ENCODE measurements at regions of chr12 and their contacts with region 1.

Region 1: GRCh38 chr12:120292661-120293531 is at the start of gene RNU4-1:
- DNase-seq: peak; percentile 84
- H3K4me3 Mint-ChIP-seq: no peak within 1 kb of the TSS
- H3K27ac Mint-ChIP-seq: no peak within 1 kb of the TSS
- H3K4me1 Mint-ChIP-seq: peaks cover 12% of the 10 kb centered on the region
- H3K27me3 Mint-ChIP-seq: peaks cover 7% of the 10 kb centered on the region
- total RNA-seq, gene RNU4-1: 1,910 to 2,156 TPM

Region 2: DNA sequence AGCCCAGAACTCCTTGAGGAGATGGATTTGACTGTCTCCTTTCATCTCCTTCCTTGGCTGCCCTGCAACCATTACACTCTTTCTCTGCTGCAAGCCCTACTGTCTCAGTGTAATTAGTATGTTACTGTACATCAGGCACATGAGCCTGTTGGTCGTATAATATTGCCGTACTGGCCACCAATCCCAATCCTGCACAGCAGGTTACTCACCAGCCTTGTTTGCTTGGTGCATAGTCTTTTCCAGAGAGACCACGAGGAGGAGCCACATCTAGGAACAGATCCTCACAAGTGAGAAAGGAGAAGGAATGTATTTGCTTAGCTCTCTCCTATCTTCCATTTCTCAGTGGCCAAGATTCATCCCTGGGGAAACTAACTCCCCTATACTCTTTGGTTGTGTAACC is 336.9 kb before region 1 on chr12:
- CTCF ChIA-PET with region 1: no interaction called
- POLR2A ChIA-PET with region 1: no interaction called
- DNase-seq: no peak
- H3K4me3 Mint-ChIP-seq: no peak overlapping the region
- H3K27ac Mint-ChIP-seq: no peak overlapping the region
- H3K4me1 Mint-ChIP-seq: no peaks in the 10 kb centered on the region
- H3K27me3 Mint-ChIP-seq: peaks cover 7% of the 10 kb centered on the region

Region 3: DNA sequence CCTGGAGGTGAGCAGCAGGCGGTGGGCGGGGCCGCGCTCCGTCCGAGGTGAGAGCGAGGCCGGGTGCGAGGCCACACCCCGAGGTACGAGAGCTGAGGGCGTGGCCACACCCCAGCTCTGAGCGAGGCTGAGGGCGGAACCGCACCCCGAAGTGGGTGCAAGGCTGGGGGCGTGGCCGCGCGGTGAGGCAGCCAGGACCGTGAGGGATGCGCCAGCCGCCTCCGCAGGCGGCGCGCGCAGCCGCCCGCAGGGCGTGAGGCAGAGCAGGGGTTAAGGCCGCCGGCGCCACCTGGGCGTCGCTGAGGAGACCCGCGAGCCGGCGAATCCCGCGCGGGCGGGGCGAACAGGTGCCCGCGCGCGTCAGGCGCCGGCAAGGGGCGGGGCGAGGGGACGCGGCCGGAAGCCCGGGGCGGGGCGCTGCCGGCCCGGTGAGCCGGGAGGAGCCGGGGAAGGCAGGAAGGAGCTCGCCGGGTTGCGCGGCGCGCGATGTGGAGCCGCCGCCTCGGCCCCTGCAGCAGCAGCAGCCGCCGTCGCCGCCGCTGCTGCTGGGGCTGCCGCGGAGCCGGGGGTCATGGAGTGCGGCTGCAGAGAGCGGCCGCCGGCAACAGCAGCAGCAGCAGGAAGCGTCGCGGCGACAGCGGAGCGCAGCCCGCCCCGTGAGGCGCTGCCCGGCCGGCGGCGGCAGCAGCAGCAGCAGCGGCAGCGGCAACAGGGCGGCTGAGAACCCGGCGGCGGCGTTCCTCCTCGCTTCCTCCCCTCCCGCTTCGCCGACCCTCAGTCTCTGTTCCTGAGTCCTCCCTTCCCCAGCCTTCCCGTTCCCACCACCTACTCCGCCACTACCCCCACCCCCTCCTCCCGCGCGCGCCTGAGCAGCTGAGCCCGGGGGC is 303.9 kb before region 1 on chr12 and contains the start of gene BICDL1:
- CTCF ChIA-PET with region 1: no interaction called
- POLR2A ChIA-PET with region 1: interaction called, 24 read pairs
- DNase-seq: peak; percentile 97
- H3K4me3 Mint-ChIP-seq: peak within 1 kb of the TSS; percentile 79
- H3K27ac Mint-ChIP-seq: peak within 1 kb of the TSS; percentile 82
- H3K4me1 Mint-ChIP-seq: peaks cover 40% of the 10 kb centered on the region
- H3K27me3 Mint-ChIP-seq: peaks cover 9% of the 10 kb centered on the region
- total RNA-seq, gene BICDL1: 44.6 to 44.7 TPM

Region 4: DNA sequence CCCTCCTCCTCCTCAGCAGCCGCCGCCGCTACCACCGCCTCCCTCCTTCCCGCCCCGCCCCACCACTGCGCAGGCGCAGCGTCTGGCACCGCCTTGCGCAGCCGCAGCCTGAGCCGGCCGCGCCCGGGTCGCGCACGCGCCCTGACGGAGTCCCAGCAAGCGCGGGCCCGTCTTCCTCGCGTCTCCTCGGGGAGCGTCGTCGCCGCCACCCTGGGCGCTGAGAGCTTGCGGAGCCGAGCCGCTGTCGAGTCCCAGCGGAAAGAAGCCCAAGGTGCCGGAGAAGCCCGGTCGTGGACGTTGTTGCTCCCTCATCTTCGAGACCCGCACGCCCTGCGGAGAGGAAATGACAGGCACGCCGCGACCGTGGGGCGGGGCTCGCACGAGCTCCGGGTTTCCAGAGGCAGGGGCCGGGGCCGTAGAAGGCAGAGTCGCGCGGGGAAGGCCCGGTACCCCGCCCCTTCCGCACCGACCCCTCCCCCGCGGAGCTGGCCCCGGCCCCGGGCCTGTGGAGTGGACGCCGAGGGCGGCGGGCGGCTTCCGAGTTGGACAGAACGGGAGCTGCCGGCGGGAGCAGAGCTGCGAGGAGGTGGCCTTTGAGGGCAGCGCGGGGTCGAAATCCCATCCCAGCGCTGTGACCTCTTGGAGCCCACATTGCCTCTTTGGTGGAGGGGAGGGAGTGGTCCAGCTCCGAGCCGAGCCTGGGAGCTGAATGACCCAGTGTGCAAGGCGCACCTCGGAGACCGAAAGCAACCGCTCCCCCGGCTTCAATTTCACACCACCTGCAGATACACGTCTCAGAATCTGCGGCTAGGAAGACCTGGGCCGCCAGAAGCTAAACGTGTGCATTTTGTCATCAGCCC is 175.9 kb before region 1 on chr12:
- CTCF ChIA-PET with region 1: interaction called, 3 read pairs
- POLR2A ChIA-PET with region 1: interaction called, 159 read pairs
- DNase-seq: peak; percentile 98
- H3K4me3 Mint-ChIP-seq: peak overlapping the region; percentile 89
- H3K27ac Mint-ChIP-seq: peak overlapping the region; percentile 80
- H3K4me1 Mint-ChIP-seq: peaks cover 76% of the 10 kb centered on the region
- H3K27me3 Mint-ChIP-seq: no peaks in the 10 kb centered on the region

Region 5: GRCh38 chr12:120234643-120235368 is 58.1 kb before region 1 on chr12:
- CTCF ChIA-PET with region 1: interaction called, 81 read pairs
- POLR2A ChIA-PET with region 1: interaction called, 330 read pairs
- DNase-seq: no peak
- H3K4me3 Mint-ChIP-seq: no peak overlapping the region
- H3K27ac Mint-ChIP-seq: no peak overlapping the region
- H3K4me1 Mint-ChIP-seq: peaks cover 85% of the 10 kb centered on the region
- H3K27me3 Mint-ChIP-seq: no peaks in the 10 kb centered on the region

Region 6: DNA sequence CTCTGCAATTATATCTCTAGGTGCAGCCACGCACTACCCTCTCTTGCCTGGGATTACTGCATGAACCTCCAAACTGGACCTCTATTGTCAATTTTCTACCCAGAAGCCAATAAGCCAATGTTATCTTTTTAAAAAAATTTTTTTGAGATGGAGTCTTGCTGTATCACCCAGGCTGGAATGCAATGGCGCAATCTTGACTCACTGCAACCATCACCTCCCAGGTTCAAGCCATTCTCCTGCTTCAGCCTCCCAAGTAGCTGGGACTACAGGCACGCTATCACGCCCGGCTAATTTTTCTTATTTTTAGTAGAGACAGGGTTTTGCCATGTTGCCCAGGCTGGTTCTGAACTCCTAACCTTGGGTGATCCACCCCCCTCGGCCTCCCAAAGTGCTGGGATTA is 16.2 kb before region 1 on chr12:
- CTCF ChIA-PET with region 1: no interaction called
- POLR2A ChIA-PET with region 1: interaction called, 58 read pairs
- DNase-seq: no peak
- H3K4me3 Mint-ChIP-seq: no peak overlapping the region
- H3K27ac Mint-ChIP-seq: no peak overlapping the region
- H3K4me1 Mint-ChIP-seq: no peaks in the 10 kb centered on the region
- H3K27me3 Mint-ChIP-seq: peaks cover 4% of the 10 kb centered on the region

Region 7: GRCh38 chr12:120469450-120470149 is 176.7 kb after region 1 on chr12 and contains the start of gene SRSF9:
- CTCF ChIA-PET with region 1: interaction called, 3 read pairs
- POLR2A ChIA-PET with region 1: interaction called, 31 read pairs
- DNase-seq: peak; percentile 97
- H3K4me3 Mint-ChIP-seq: peak within 1 kb of the TSS; percentile 93
- H3K27ac Mint-ChIP-seq: peak within 1 kb of the TSS; percentile 84
- H3K4me1 Mint-ChIP-seq: peaks cover 47% of the 10 kb centered on the region
- H3K27me3 Mint-ChIP-seq: peaks cover 2% of the 10 kb centered on the region
- total RNA-seq, gene SRSF9: 175 to 180 TPM

Region 8: GRCh38 chr12:121005346-121005815 is 712.5 kb after region 1 on chr12:
- CTCF ChIA-PET with region 1: no interaction called
- POLR2A ChIA-PET with region 1: no interaction called
- DNase-seq: peak; percentile 73
- H3K4me3 Mint-ChIP-seq: no peak overlapping the region
- H3K27ac Mint-ChIP-seq: peak overlapping the region; percentile 17
- H3K4me1 Mint-ChIP-seq: peaks cover 5% of the 10 kb centered on the region
- H3K27me3 Mint-ChIP-seq: no peaks in the 10 kb centered on the region